ENCODE measurements at regions of chr11 and their contacts with region 1.

Region 1: DNA sequence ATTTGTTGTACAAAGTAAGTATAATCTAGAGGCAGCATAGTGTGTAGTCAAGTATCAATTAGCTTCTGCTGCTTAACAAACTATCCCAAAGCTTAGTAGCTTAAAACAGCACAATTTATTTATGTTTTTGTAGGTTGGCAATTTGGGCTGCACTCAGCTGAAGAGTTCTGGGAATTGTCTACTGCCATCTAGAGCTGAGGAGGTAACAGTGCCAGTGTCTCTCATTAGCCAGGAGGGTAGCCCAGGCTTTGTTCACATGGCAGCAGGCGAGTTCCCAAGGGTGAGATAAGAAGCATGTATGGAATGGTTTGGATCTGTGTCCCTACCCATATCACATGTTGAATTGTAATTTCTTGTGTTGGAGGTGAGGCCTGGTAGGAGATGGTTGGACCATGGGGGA is 45.8 kb upstream of the SLN start:
- DNase-seq: no peak
- ATAC-seq: no peak

Region 2: GRCh38 chr11:107741044-107741823 is 16.4 kb before region 1 on chr11:
- intact Hi-C with region 1: loop called (anchors 1 kb)
- DNase-seq: no peak
- ATAC-seq: no peak

Measured in sciatic nerve (tissue), 2 donors.